IMR-90 (cell line): ENCODE measurements at regions of chr4 and their contacts with region 1.

Region 1: GRCh38 chr4:117134386-117134785 is 49.0 kb upstream of the TRAM1L1 start:
- DNase-seq: peak; percentile 84
- ATAC-seq: peak; percentile 82
- H3K4me3 ChIP-seq: no peak overlapping the region
- H3K27ac ChIP-seq: no peak overlapping the region
- H3K4me1 ChIP-seq: no peaks in the 10 kb centered on the region
- H3K27me3 ChIP-seq: no peaks in the 10 kb centered on the region
- CTCF ChIP-seq: peak; percentile 77
- POLR2A ChIP-seq: no peak
- RAD21 ChIP-seq: peak; percentile 93

Region 2: DNA sequence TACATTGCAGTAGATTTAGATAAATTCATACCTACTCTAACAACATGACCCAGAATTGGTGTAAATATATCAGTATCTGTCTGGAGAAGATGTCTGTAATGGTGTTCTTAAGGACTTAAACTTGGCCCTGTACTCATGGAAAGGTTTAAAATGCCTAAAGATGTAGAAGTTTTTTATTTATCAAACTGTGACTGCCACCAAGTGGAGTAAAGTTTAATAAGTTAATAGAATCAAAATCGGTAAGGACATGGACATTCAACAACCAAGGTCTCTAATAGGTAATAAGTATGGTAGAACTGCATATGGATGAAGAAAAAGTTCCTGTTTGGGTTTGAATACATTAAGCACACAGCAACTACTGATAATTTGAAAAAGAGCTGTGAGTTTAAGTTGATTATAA is 425.9 kb after region 1 on chr4:
- CTCF ChIA-PET with region 1: interaction called, 9 read pairs
- POLR2A ChIA-PET with region 1: no interaction called
- dilution Hi-C with region 1: no loop called
- in situ Hi-C with region 1: loop called (anchors 10 kb)
- intact Hi-C with region 1: loop called (anchors 1 kb)
- DNase-seq: peak; percentile 40
- ATAC-seq: peak; percentile 35; the same call in 1 of the 2 replicates
- H3K4me3 ChIP-seq: no peak overlapping the region
- H3K27ac ChIP-seq: no peak overlapping the region
- H3K4me1 ChIP-seq: no peaks in the 10 kb centered on the region
- H3K27me3 ChIP-seq: no peaks in the 10 kb centered on the region
- CTCF ChIP-seq: peak; percentile 37
- POLR2A ChIP-seq: no peak
- RAD21 ChIP-seq: peak; percentile 41

Region 3: GRCh38 chr4:118034053-118034785 is 899.8 kb after region 1 on chr4 and contains the start of gene NDST3:
- CTCF ChIA-PET with region 1: no interaction called
- POLR2A ChIA-PET with region 1: no interaction called
- dilution Hi-C with region 1: no loop called
- in situ Hi-C with region 1: loop called (anchors 25 kb)
- intact Hi-C with region 1: loop called (anchors 2 kb)
- DNase-seq: peak; percentile 31
- ATAC-seq: peak; percentile 28
- H3K4me3 ChIP-seq: peak within 1 kb of the TSS; percentile 44
- H3K27ac ChIP-seq: no peak within 1 kb of the TSS
- H3K4me1 ChIP-seq: no peaks in the 10 kb centered on the region
- H3K27me3 ChIP-seq: 0 out of 2 replicates have a peak, but pooled peaks cover 2% of the 10 kb centered on the region
- CTCF ChIP-seq: peak; percentile 29; the same call in 1 of the 2 replicates
- POLR2A ChIP-seq: no peak
- RAD21 ChIP-seq: peak; percentile 50
- total RNA-seq, gene NDST3: under 0.01 and 0.18 TPM in 2 replicates

Region 4: DNA sequence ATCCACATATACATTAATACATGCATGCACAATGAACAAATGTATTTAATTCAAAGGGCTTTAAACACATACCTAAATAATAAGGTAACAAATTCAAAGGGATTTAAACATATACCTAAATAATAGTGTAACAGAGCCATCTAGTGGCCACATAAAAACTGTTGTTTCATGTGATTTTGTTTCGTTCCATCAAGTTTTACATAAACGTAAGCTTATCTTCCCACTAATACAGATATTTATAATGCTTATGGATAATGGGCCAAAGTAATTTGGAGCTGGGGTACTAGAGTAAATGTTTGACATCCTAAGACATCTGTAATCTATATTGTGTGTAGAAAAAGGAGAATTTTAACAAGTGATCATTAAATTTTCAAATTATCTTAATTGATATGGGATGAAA is 1136.1 kb after region 1 on chr4:
- CTCF ChIA-PET with region 1: no interaction called
- POLR2A ChIA-PET with region 1: no interaction called
- dilution Hi-C with region 1: no loop called
- in situ Hi-C with region 1: loop called (anchors 10 kb)
- intact Hi-C with region 1: loop called (anchors 2 kb)
- DNase-seq: peak; percentile 66
- ATAC-seq: peak; percentile 68; the same call in 1 of the 2 replicates
- H3K4me3 ChIP-seq: no peak overlapping the region
- H3K27ac ChIP-seq: no peak overlapping the region
- H3K4me1 ChIP-seq: no peaks in the 10 kb centered on the region
- H3K27me3 ChIP-seq: peaks cover 2% of the 10 kb centered on the region
- CTCF ChIP-seq: peak; percentile 68
- POLR2A ChIP-seq: no peak
- RAD21 ChIP-seq: peak; percentile 61

Region 5: DNA sequence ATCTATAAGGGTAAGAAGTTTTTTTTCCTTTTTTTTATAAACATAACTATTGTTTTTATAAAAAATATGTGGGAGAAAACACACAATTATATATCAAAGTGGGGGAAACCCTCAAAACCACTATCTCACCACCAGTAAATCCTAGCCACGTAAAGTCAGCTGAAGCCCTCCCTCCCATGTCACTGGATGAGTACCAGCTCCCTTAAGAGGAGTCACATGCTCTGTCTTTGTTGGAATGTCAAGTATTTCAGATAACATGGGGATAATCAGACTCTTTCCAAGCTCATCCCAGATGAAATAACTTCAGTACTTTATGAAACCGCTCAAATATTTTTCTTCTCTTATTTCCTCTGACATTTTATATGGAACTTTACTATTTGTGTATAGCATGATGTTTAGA is 2003.7 kb after region 1 on chr4:
- CTCF ChIA-PET with region 1: no interaction called
- POLR2A ChIA-PET with region 1: no interaction called
- dilution Hi-C with region 1: no loop called
- in situ Hi-C with region 1: no loop called
- intact Hi-C with region 1: loop called (anchors 10 kb)
- DNase-seq: peak; percentile 61
- ATAC-seq: peak; percentile 68
- H3K4me3 ChIP-seq: no peak overlapping the region
- H3K27ac ChIP-seq: no peak overlapping the region
- H3K4me1 ChIP-seq: peaks cover 7% of the 10 kb centered on the region; the same call in 1 of the 2 replicates
- H3K27me3 ChIP-seq: no peaks in the 10 kb centered on the region
- CTCF ChIP-seq: no peak
- POLR2A ChIP-seq: no peak
- RAD21 ChIP-seq: no peak